ENCODE measurements at regions of chr10 and their contacts with region 1.

Region 1: GRCh38 chr10:131981429-131982184 is at the start of gene BNIP3:
- DNase-seq: peak; percentile 92
- ATAC-seq: peak; percentile 74
- H3K4me3 ChIP-seq: peak within 1 kb of the TSS; percentile 92
- H3K27ac ChIP-seq: no peak within 1 kb of the TSS
- H3K4me1 ChIP-seq: peaks cover 34% of the 10 kb centered on the region
- H3K27me3 ChIP-seq: no peaks in the 10 kb centered on the region
- CTCF ChIP-seq: 0 out of 2 replicates have a peak, but pooled peaks have one; percentile 13
- total RNA-seq, gene BNIP3: 197 and 225 TPM in 2 replicates

Region 2: DNA sequence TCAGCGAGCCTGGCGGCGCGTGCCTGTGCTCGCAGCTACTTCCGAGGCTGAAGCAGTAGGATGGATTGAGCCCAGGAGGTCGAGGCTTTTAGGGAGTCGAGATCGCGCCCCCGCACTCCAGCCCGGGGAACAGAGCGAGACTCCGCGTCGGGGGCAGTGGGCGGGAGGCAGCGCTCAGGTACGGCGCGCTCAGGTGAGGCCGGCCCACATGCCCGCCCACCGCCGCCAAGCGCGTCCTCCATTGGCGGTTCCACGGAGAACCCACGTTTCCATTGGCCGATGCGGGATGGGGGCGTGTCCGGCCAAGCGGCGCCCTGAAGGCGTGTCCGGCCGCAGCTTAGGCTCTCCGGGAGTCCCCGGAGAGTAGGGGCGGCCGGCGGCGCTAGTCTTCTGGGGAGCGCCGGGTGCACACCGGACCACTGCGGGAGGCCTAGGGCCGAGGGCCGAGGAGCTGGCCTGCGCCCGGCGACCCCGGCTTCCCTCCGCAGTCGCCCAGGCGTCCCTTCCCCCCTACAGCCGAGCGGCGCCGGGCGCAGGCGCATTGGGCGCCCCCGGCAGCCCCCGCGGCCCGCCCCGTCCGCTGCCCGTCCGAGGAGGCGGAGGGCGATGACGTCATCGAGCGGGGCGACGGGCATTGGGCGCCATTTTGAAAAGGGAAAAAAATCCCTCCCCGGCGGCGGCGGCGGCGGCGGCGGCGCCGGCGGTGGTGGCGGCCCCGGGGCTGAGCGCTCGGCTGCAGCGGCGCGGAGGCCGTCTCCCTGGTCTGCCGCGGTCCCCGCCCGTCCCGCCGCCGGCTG is 81.1 kb before region 1 on chr10 and contains the start of gene PPP2R2D:
- CTCF ChIA-PET with region 1: no interaction called
- POLR2A ChIA-PET with region 1: no interaction called
- intact Hi-C with region 1: loop called (anchors 5 kb)
- DNase-seq: peak; percentile 90
- ATAC-seq: peak; percentile 89
- H3K4me3 ChIP-seq: peak within 1 kb of the TSS; percentile 77
- H3K27ac ChIP-seq: peak within 1 kb of the TSS; percentile 36; the same call in 1 of the 2 replicates
- H3K4me1 ChIP-seq: peaks cover 25% of the 10 kb centered on the region
- H3K27me3 ChIP-seq: no peaks in the 10 kb centered on the region
- CTCF ChIP-seq: no peak
- total RNA-seq, gene PPP2R2D: 30.6 and 40.3 TPM in 2 replicates

Region 3: GRCh38 chr10:131943021-131943814 is 38.4 kb before region 1 on chr10:
- CTCF ChIA-PET with region 1: no interaction called
- POLR2A ChIA-PET with region 1: interaction called, 3 read pairs
- intact Hi-C with region 1: loop called (anchors 2 kb)
- DNase-seq: peak; percentile 20
- ATAC-seq: no peak
- H3K4me3 ChIP-seq: no peak overlapping the region
- H3K27ac ChIP-seq: no peak overlapping the region
- H3K4me1 ChIP-seq: peaks cover 43% of the 10 kb centered on the region
- H3K27me3 ChIP-seq: no peaks in the 10 kb centered on the region
- CTCF ChIP-seq: peak; percentile 60

Region 4: GRCh38 chr10:132023092-132023811 is 41.6 kb after region 1 on chr10:
- CTCF ChIA-PET with region 1: no interaction called
- POLR2A ChIA-PET with region 1: interaction called, 3 read pairs
- intact Hi-C with region 1: loop called (anchors 5 kb)
- DNase-seq: peak; percentile 77
- ATAC-seq: peak; percentile 91
- H3K4me3 ChIP-seq: peak overlapping the region; percentile 69
- H3K27ac ChIP-seq: no peak overlapping the region
- H3K4me1 ChIP-seq: 0 out of 2 replicates have a peak, but pooled peaks cover 5% of the 10 kb centered on the region
- H3K27me3 ChIP-seq: peaks cover 36% of the 10 kb centered on the region
- CTCF ChIP-seq: peak; percentile 82